ENCODE measurements at regions of chr7 and their contacts with region 1.

Region 1: GRCh38 chr7:32204361-32205018 is 134.3 kb upstream of the PDE1C start:
- DNase-seq: peak; percentile 65
- ATAC-seq: peak; percentile 96
- H3K4me3 ChIP-seq: no peak overlapping the region
- H3K27ac ChIP-seq: no peak overlapping the region
- H3K4me1 ChIP-seq: no peaks in the 10 kb centered on the region
- H3K27me3 ChIP-seq: peaks cover 0 to 7% of the 10 kb centered on the region in 2 experiments; a peak in 1 of 5 replicates
- CTCF ChIP-seq: peak; percentile 77
- EP300 ChIP-seq: no peak
- POLR2A ChIP-seq: no peak
- RAD21 ChIP-seq: peak; percentile 76

Region 2: DNA sequence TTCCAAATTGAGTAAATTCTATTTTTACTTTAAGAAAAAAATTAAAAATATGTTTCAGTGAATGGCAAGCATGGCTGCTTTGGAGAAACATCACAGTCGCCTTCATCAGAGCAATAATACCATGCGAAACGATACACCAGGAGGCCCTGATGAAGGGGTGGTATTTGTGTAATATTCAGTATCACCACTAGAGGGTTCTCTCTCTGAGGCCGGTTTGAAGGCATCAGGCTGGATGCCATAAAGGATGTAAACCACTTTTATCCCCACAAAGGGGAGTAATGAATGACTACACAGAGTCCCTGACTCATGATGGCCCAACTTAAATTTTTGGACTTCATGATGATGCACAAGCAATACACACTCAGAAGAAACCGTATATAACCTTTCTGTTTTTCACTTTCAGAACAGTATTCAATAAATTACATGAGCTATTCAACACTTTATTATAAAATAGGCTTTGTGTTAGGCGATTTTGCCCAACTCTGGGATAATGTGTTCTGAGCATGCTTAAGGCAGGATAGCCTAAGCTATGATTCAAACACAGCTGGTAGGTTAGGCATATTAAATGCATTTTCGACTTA is 422.0 kb before region 1 on chr7:
- CTCF ChIA-PET with region 1: interaction called, 5 read pairs
- POLR2A ChIA-PET with region 1: no interaction called
- in situ Hi-C with region 1: no loop called
- intact Hi-C with region 1: loop called (anchors 1 kb)
- DNase-seq: peak; percentile 47
- ATAC-seq: peak; percentile 93
- H3K4me3 ChIP-seq: no peak overlapping the region
- H3K27ac ChIP-seq: no peak overlapping the region
- H3K4me1 ChIP-seq: no peaks in the 10 kb centered on the region
- H3K27me3 ChIP-seq: 0 out of 5 replicates have a peak, but pooled peaks cover 0 to 4% of the 10 kb centered on the region in 2 experiments
- CTCF ChIP-seq: peak; percentile 64
- EP300 ChIP-seq: no peak
- POLR2A ChIP-seq: no peak
- RAD21 ChIP-seq: no peak

Region 3: GRCh38 chr7:31814187-31814586 is 390.3 kb before region 1 on chr7:
- CTCF ChIA-PET with region 1: no interaction called
- POLR2A ChIA-PET with region 1: no interaction called
- in situ Hi-C with region 1: no loop called
- intact Hi-C with region 1: loop called (anchors 1 kb)
- DNase-seq: peak; percentile 13
- ATAC-seq: peak; percentile 49; the same call in 1 of the 3 replicates
- H3K4me3 ChIP-seq: no peak overlapping the region
- H3K27ac ChIP-seq: no peak overlapping the region
- H3K4me1 ChIP-seq: no peaks in the 10 kb centered on the region
- H3K27me3 ChIP-seq: no peaks in the 10 kb centered on the region
- CTCF ChIP-seq: peak; percentile 41
- EP300 ChIP-seq: no peak
- POLR2A ChIP-seq: no peak
- RAD21 ChIP-seq: no peak

Region 4: GRCh38 chr7:32479574-32480200 is 275.2 kb after region 1 on chr7:
- CTCF ChIA-PET with region 1: interaction called, 37 read pairs
- POLR2A ChIA-PET with region 1: no interaction called
- in situ Hi-C with region 1: no loop called
- intact Hi-C with region 1: no loop called
- DNase-seq: peak; percentile 54
- ATAC-seq: peak; percentile 49; the same call in 2 of the 3 replicates
- H3K4me3 ChIP-seq: no peak overlapping the region
- H3K27ac ChIP-seq: no peak overlapping the region
- H3K4me1 ChIP-seq: no peaks in the 10 kb centered on the region
- H3K27me3 ChIP-seq: no peaks in the 10 kb centered on the region
- CTCF ChIP-seq: peak; percentile 85
- EP300 ChIP-seq: no peak
- POLR2A ChIP-seq: no peak
- RAD21 ChIP-seq: peak; percentile 62

Measured in HepG2 (cell line).